Mucosa of descending colon (tissue), 3 donors: ENCODE measurements at regions of chr14 and their contacts with region 1.

Region 1: DNA sequence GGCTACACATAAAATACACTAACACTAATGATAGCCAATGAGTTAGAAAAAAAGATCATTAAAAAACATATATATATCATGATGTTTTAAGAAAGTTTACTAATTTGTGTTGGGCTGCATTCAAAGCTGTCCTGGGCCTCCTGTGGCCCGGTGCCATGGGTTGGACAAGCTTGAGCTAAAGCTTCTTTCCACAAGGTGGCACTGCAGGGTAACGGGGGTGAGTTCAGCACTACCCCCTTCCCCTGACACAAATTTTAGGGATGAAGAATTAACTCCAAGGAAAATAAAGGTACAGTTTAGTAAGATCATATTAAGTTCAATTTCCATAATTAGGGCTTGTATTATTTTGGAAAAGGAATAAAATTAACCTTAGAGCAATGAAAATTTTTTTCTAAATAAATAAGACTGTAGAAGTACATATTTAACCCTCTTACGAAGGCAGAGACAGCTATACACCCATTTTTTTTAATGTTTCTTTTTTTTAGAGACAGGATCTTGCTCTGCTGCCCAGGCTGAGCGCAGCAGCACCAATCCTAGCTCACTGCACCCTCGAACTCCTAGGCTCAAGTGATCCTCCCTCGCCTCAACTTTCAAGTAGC is 38.9 kb downstream of the PPP1R13B start:
- DNase-seq: peak in 2 of 3 donors; percentile 72 to 87
- ATAC-seq: peak; percentile 90
- H3K4me3 ChIP-seq: no peak overlapping the region
- H3K4me1 ChIP-seq: no peaks in the 10 kb centered on the region
- CTCF ChIP-seq: peak; percentile 44

Region 2: DNA sequence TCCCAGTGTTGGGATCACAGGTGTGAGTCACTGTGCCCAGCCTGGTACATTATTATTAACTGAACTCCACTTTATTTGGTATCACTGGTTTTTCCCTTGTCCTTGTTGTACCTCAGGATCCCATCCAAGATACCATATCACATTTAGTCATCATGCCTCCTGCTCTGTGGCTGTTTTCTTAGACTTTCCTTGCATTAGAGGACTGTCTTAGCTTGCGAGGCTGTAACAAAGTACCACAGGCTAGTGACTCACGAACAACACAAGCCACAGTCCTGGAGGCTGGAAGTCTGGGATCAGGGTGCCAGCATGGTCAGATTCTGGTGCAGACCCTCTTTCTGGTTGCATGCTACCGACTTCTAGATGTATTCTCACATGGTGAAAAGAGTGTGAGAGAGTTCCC is 167.3 kb before region 1 on chr14:
- intact Hi-C with region 1: no loop called
- DNase-seq: no peak
- ATAC-seq: no peak
- H3K4me3 ChIP-seq: no peak overlapping the region
- H3K4me1 ChIP-seq: no peaks in the 10 kb centered on the region
- CTCF ChIP-seq: no peak

Region 3: GRCh38 chr14:103910262-103910935 is 101.9 kb after region 1 on chr14:
- intact Hi-C with region 1: loop called (anchors 5 kb)
- DNase-seq: peak; percentile 87 to 93 (median 88)
- ATAC-seq: peak; percentile 100
- H3K4me3 ChIP-seq: no peak overlapping the region
- H3K4me1 ChIP-seq: no peaks in the 10 kb centered on the region
- CTCF ChIP-seq: peak; percentile 58

Region 4: DNA sequence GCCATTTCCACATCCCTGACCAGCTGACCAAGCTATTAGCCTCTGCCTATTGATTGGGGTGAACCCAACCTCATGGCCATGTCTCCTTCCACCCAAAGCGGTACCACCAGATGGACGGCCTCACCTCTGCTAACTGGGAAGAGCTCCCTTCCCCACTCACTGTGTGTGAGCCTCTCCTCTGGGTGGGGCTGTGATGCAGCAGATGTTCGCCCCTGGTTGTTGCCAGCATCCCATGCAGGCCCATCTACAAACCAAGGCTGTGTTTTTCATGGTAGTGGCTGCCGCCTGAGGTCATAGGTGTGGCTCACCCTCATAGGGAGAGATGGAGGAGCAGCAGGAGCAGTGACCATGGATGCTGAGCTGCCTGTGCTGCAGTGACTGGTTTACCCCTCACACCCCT is 181.5 kb after region 1 on chr14:
- intact Hi-C with region 1: loop called in 1 of 2 experiments (anchors 10 kb)
- DNase-seq: no peak
- ATAC-seq: no peak
- H3K4me3 ChIP-seq: no peak overlapping the region
- H3K4me1 ChIP-seq: no peaks in the 10 kb centered on the region
- CTCF ChIP-seq: no peak